Caco-2 (cell line): ENCODE measurements at regions of chr6 and their contacts with region 1.

Region 1: DNA sequence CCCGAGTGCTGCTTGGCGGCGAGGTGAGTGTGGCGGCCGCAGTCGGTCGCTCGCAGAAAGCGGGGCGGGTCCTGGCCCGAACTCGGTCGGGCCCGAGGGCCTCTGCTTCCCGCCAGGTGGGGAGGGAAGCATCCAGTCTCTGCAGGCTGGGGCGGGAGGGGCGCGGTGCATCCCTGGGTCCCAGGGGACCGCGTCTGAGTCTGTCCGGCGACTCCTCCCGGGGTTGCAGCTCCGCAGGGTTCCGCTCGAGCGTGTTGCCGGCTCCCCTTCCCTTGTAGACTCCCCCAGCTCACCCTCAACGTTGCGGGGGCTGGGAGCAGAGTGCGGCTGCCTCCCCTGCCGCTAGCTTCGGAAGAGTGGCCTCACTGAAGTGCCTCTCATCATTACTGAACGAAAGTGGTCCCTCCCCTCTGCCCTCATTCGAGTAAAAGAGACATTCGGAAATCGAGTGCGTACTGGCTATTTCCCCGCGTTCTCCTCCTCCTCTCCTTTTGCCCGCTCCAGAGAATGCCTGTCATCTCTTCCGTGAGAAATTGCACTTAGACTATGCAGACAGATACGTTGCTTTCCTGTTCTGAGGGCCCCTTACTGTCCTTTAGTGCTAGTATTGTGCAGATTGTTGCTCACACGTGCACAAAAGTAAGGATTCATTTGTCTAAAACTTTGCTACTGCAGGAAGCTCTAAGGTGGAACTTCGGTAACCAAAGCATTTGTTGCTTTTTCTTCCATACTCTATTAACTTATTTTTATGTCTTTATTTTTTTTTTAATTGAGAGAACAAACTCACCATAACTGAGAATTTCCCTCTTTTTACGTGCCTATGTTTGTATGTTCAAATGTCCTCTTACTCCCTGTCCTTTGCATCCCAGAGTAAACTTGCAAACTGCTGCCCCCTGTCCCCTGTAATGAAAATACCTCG is 751 bp downstream of the MAP3K4 start:
- DNase-seq: peak; percentile 48 to 64
- H3K4me3 ChIP-seq: peak overlapping the region; percentile 97
- H3K4me3 Mint-ChIP-seq: peak overlapping the region; percentile 96
- H3K27ac Mint-ChIP-seq: peak overlapping the region; percentile 94
- H3K4me1 ChIP-seq: no peaks in the 10 kb centered on the region; the same call in 1 of the 2 replicates
- H3K4me1 Mint-ChIP-seq: no peaks in the 10 kb centered on the region
- H3K27me3 ChIP-seq: no peaks in the 10 kb centered on the region
- H3K27me3 Mint-ChIP-seq: no peaks in the 10 kb centered on the region
- CTCF ChIP-seq: peak; percentile 58 to 76

Region 2: GRCh38 chr6:160733050-160733646 is 259.2 kb before region 1 on chr6:
- CTCF ChIA-PET with region 1: no interaction called
- POLR2A ChIA-PET with region 1: no interaction called
- intact Hi-C with region 1: loop called (anchors 1 kb)
- DNase-seq: peak; percentile 36 to 42
- H3K4me3 ChIP-seq: no peak overlapping the region
- H3K4me3 Mint-ChIP-seq: no peak overlapping the region
- H3K27ac Mint-ChIP-seq: no peak overlapping the region
- H3K4me1 ChIP-seq: no peaks in the 10 kb centered on the region
- H3K4me1 Mint-ChIP-seq: no peaks in the 10 kb centered on the region
- H3K27me3 ChIP-seq: no peaks in the 10 kb centered on the region
- H3K27me3 Mint-ChIP-seq: peaks cover 2% of the 10 kb centered on the region
- CTCF ChIP-seq: peak; percentile 62 to 68

Region 3: DNA sequence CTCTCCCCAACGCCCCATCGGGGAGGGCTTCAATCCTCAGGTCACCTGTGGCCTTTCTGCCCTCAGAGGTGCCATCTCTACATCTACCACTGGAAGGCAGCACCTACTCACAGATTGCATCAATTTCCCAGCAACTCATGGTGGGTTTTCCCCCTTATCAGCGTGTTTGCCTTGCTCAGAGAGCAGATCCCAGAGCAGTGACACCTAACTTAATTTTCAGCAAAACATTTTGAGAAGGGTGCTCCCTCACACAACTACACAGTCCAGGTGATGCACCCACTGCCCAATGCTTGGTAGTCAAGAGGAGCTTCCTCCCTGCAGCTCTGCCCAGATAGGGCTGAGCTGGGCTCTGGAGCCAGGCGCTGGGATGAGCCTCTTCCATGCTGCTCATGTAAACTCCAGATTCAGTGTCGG is 242.0 kb before region 1 on chr6:
- CTCF ChIA-PET with region 1: interaction called, 5 read pairs
- POLR2A ChIA-PET with region 1: no interaction called
- intact Hi-C with region 1: loop called (anchors 1 kb)
- DNase-seq: peak in 1 of 2 experiments; percentile 31
- H3K4me3 ChIP-seq: no peak overlapping the region
- H3K4me3 Mint-ChIP-seq: no peak overlapping the region
- H3K27ac Mint-ChIP-seq: no peak overlapping the region
- H3K4me1 ChIP-seq: no peaks in the 10 kb centered on the region
- H3K4me1 Mint-ChIP-seq: no peaks in the 10 kb centered on the region
- H3K27me3 ChIP-seq: no peaks in the 10 kb centered on the region; the same call in 1 of the 2 replicates
- H3K27me3 Mint-ChIP-seq: peaks cover 12% of the 10 kb centered on the region
- CTCF ChIP-seq: peak; percentile 48 to 73

Region 4: GRCh38 chr6:160791459-160791858 is 200.9 kb before region 1 on chr6:
- CTCF ChIA-PET with region 1: no interaction called
- POLR2A ChIA-PET with region 1: no interaction called
- intact Hi-C with region 1: loop called (anchors 1 kb)
- DNase-seq: no peak
- H3K4me3 ChIP-seq: no peak overlapping the region
- H3K4me3 Mint-ChIP-seq: no peak overlapping the region
- H3K27ac Mint-ChIP-seq: no peak overlapping the region
- H3K4me1 ChIP-seq: no peaks in the 10 kb centered on the region
- H3K4me1 Mint-ChIP-seq: no peaks in the 10 kb centered on the region
- H3K27me3 ChIP-seq: no peaks in the 10 kb centered on the region
- H3K27me3 Mint-ChIP-seq: no peaks in the 10 kb centered on the region
- CTCF ChIP-seq: no peak

Region 5: GRCh38 chr6:160863782-160864181 is 128.5 kb before region 1 on chr6:
- CTCF ChIA-PET with region 1: no interaction called
- POLR2A ChIA-PET with region 1: no interaction called
- intact Hi-C with region 1: loop called (anchors 10 kb)
- DNase-seq: no peak
- H3K4me3 ChIP-seq: no peak overlapping the region
- H3K4me3 Mint-ChIP-seq: no peak overlapping the region
- H3K27ac Mint-ChIP-seq: no peak overlapping the region
- H3K4me1 ChIP-seq: no peaks in the 10 kb centered on the region
- H3K4me1 Mint-ChIP-seq: no peaks in the 10 kb centered on the region
- H3K27me3 ChIP-seq: no peaks in the 10 kb centered on the region
- H3K27me3 Mint-ChIP-seq: no peaks in the 10 kb centered on the region
- CTCF ChIP-seq: no peak